Thyroid gland (tissue), 4 donors: ENCODE measurements at regions of chr4 and their contacts with region 1.

Region 1: GRCh38 chr4:17614416-17615299 is at the start of gene MED28:
- DNase-seq: peak; percentile 97 to 98
- H3K4me3 ChIP-seq: peak within 1 kb of the TSS; percentile 52 to 100 (median 56)
- H3K27ac ChIP-seq: peak within 1 kb of the TSS; percentile 48 to 72 (median 48)
- H3K4me1 ChIP-seq: peaks cover 18 to 34% of the 10 kb centered on the region in 2 donors
- H3K27me3 ChIP-seq: no peaks in the 10 kb centered on the region
- CTCF ChIP-seq: peak in 3 of 6 experiments; percentile 1 to 35 (median 35)
- POLR2A ChIP-seq: peak; percentile 15 to 88
- total RNA-seq, gene MED28: 14.9 to 25.6 (median 19.4) TPM

Region 2: DNA sequence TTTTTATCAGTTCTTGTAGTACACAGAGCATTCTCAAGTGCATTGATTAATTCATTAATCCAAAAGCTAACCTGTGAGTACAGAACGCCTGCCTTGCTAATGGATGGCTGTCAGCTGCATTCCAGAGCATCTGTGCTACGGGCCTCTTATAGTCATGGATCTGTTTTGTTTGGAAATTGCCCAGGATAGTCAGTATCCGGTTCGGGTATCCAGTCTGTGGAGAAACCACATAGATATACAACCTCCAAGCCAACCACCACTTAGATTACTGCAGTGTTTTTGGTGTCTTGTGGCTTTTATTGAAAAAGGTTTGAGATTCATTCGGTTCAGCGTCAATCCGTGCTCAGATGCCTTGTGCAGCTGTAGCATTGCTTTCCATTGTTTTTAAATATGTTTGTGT is 33.7 kb before region 1 on chr4:
- intact Hi-C with region 1: loop called (anchors 5 kb)
- DNase-seq: no peak
- H3K4me3 ChIP-seq: no peak overlapping the region
- H3K27ac ChIP-seq: no peak overlapping the region
- H3K4me1 ChIP-seq: peaks cover 3 to 15% of the 10 kb centered on the region in 2 donors
- H3K27me3 ChIP-seq: no peaks in the 10 kb centered on the region
- CTCF ChIP-seq: no peak
- POLR2A ChIP-seq: no peak